ENCODE measurements at regions of chr9 and their contacts with region 1.

Region 1: DNA sequence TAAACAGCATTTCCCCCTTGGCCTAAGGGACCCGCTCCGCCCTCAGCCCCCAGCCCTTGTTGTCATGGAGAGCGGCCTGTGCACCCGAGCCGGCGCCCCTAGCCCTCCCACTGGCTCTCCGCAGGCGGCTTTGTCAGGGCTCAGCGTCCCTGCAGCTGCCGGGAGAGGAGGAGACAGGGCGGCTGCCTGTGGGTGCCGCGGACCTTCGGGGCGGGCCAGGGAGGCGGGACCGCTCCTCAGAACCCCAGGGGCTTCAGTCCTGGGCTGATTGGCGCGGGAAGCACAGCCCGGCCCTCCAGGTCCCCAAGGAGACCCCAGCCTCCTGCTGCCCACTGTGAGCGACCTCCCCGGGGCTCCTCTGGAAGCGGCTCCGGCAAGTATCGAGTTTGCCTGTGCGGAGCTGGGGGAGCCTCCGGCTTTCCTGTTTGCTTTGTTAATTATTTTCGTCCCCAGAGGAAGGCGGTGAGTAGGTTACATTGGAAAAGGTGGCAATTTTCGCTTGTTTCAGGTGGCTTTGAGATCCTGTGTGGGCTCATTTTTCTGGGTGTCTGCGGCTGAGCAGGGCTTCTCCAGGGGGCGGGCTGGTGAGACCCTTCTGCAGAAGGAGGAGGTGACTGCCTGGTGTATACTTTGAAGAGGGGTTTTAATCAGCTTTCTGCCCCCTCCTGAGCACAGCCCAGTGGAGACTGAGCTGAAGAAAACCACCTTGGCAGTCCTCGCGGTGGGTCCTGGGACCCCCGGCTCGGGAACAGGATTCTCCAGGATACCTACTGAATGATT is at the start of gene FGD3:
- DNase-seq: peak in 1 of 2 experiments; percentile 60
- H3K4me3 ChIP-seq: peak within 1 kb of the TSS; percentile 73
- H3K27ac ChIP-seq: no peak within 1 kb of the TSS
- H3K4me1 ChIP-seq: peaks cover 15% of the 10 kb centered on the region
- H3K27me3 ChIP-seq: no peaks in the 10 kb centered on the region
- CTCF ChIP-seq: no peak
- total RNA-seq, gene FGD3: 84.9 and 89.0 TPM in 2 replicates

Region 2: GRCh38 chr9:92723299-92723625 is 224.2 kb before region 1 on chr9:
- CTCF ChIA-PET with region 1: no interaction called
- POLR2A ChIA-PET with region 1: no interaction called
- intact Hi-C with region 1: loop called (anchors 1 kb)
- DNase-seq: no peak
- H3K4me3 ChIP-seq: no peak overlapping the region
- H3K27ac ChIP-seq: no peak overlapping the region
- H3K4me1 ChIP-seq: no peaks in the 10 kb centered on the region
- H3K27me3 ChIP-seq: no peaks in the 10 kb centered on the region
- CTCF ChIP-seq: no peak

Region 3: GRCh38 chr9:92877531-92878430 is 69.7 kb before region 1 on chr9 and contains the start of gene ZNF484:
- CTCF ChIA-PET with region 1: no interaction called
- POLR2A ChIA-PET with region 1: interaction called, 10 read pairs
- intact Hi-C with region 1: no loop called
- DNase-seq: peak; percentile 94 to 99
- H3K4me3 ChIP-seq: peak within 1 kb of the TSS; percentile 68
- H3K27ac ChIP-seq: peak within 1 kb of the TSS; percentile 72
- H3K4me1 ChIP-seq: peaks cover 28% of the 10 kb centered on the region
- H3K27me3 ChIP-seq: no peaks in the 10 kb centered on the region
- CTCF ChIP-seq: no peak
- total RNA-seq, gene ZNF484: 8.4 and 10.8 TPM in 2 replicates

Measured in PC-9 (cell line).